HepG2 (cell line): ENCODE measurements at regions of chr1 and their contacts with region 1.

Region 1: DNA sequence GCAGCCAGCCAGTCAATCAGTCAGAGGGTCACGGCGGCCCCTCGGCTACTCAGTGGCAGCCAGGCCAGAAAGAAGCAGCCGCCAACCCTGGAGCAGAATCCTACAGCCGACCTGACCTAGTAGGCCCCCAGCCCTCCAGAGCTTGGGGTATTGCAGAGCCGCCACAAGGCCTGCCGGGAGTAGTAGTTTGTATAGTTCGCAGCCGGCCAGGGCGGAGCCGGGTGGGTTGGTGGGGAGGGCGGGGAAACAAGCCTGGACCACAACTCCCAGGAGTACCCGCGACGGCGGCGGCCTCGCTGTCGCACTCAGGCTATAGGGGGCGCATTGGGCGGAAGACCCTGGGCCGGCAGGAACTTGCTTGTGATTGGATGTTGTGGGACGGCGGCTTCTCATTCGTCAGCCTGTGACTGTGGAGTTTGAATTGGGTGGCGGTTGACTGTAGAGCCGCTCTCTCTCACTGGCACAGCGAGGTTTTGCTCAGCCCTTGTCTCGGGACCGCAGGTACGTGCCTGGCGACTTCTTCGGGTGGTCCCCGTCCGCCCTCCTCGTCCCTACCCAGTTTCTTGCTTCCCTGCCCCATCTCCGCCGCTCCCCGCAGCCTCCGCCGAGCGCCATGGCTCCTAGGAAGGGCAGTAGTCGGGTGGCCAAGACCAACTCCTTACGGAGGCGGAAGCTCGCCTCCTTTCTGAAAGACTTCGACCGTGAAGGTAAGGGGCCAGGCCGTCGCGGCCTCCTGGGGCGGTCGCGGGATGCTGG is at the start of gene CDCA8:
- DNase-seq: peak; percentile 95
- ATAC-seq: peak; percentile 93
- H3K4me3 ChIP-seq: peak within 1 kb of the TSS; percentile 83 to 99 (median 94)
- H3K27ac ChIP-seq: peak within 1 kb of the TSS; percentile 73
- H3K4me1 ChIP-seq: peaks cover 22% of the 10 kb centered on the region
- H3K27me3 ChIP-seq: no peaks in the 10 kb centered on the region; a peak in 1 of 5 replicates
- CTCF ChIP-seq: peak; percentile 89
- EP300 ChIP-seq: peak in 1 of 2 experiments; percentile 35; a peak in 1 of 4 replicates
- POLR2A ChIP-seq: peak; percentile 79 to 91; a peak in 3 of 4 replicates
- RAD21 ChIP-seq: 0 out of 2 replicates have a peak, but pooled peaks have one; percentile 25
- total RNA-seq, gene CDCA8: 38.6 and 48.7 TPM in 2 replicates

Region 2: GRCh38 chr1:37474046-37474759 is 218.1 kb before region 1 on chr1 and contains the start of gene ZC3H12A:
- CTCF ChIA-PET with region 1: no interaction called
- POLR2A ChIA-PET with region 1: interaction called, 8 read pairs
- in situ Hi-C with region 1: no loop called
- intact Hi-C with region 1: loop called (anchors 10 kb)
- DNase-seq: peak; percentile 78
- ATAC-seq: peak; percentile 51
- H3K4me3 ChIP-seq: peak within 1 kb of the TSS; percentile 70 to 85 (median 80)
- H3K27ac ChIP-seq: peak within 1 kb of the TSS; percentile 64
- H3K4me1 ChIP-seq: peaks cover 82% of the 10 kb centered on the region
- H3K27me3 ChIP-seq: no peaks in the 10 kb centered on the region; a peak in 1 of 5 replicates
- CTCF ChIP-seq: no peak
- EP300 ChIP-seq: peak in 1 of 2 experiments; percentile 32; a peak in 2 of 4 replicates
- POLR2A ChIP-seq: peak in 1 of 2 experiments; percentile 82; a peak in 2 of 4 replicates
- RAD21 ChIP-seq: peak; percentile 23; the same call in 1 of the 2 replicates
- total RNA-seq, gene ZC3H12A: 4.2 and 6.8 TPM in 2 replicates

Region 3: DNA sequence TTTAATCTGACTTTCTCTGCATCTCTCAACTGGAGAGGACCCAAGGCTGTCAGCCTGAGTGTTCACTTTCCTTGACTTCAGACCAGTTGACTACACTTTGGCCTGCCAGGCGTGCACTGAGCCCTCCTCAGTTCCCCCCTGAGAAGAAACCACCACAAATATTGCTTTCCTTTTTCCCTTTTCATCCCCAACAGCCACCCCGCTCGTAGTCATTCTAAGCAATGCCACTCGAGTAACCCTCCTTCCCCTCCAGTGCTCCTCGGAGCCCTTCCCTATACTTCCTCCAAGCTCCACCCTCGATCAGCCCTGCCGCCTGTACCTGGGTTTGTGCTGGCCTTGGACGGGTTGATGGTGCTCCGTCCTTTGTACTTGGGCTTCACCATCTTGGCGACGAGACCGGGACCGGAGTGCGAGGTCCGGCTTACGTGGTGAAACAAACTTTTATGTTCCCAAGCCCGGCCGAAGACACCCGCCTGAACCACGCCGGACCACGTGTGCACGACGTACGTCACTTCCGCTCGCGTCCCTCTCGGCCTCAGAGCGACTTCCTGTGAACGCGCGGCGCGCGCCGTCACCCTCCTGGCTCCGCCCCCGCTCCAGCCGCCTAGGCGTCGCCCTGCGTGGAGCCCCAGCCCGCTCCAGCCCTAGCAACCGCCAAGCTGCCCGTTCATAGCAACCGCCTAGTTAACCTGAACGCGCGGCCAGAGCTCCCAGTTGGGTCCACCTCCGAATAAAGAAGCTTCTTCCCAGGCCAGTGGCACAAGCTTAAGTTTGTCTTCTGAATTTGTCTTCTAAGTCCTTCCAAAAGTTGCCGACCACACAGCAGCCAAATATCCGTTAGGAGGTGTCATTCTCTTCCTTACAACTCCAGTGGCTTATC is 96.6 kb before region 1 on chr1 and contains the start of gene GNL2:
- CTCF ChIA-PET with region 1: no interaction called
- POLR2A ChIA-PET with region 1: interaction called, 14 read pairs
- in situ Hi-C with region 1: no loop called
- intact Hi-C with region 1: no loop called
- DNase-seq: peak; percentile 92
- ATAC-seq: peak; percentile 99
- H3K4me3 ChIP-seq: peak within 1 kb of the TSS; percentile 71 to 90 (median 87)
- H3K27ac ChIP-seq: peak within 1 kb of the TSS; percentile 72
- H3K4me1 ChIP-seq: peaks cover 25% of the 10 kb centered on the region
- H3K27me3 ChIP-seq: peaks cover 2 to 18% of the 10 kb centered on the region in 2 experiments; a peak in 3 of 5 replicates
- CTCF ChIP-seq: peak; percentile 28
- EP300 ChIP-seq: peak in 1 of 2 experiments; percentile 43; a peak in 1 of 4 replicates
- POLR2A ChIP-seq: peak; percentile 94 to 96
- RAD21 ChIP-seq: 0 out of 2 replicates have a peak, but pooled peaks have one; percentile 15
- total RNA-seq, gene GNL2: 72.1 and 101 TPM in 2 replicates

Region 4: GRCh38 chr1:37807555-37808368 is 115.5 kb after region 1 on chr1 and contains the starts of genes C1orf122 and YRDC:
- CTCF ChIA-PET with region 1: no interaction called
- POLR2A ChIA-PET with region 1: interaction called, 17 read pairs
- in situ Hi-C with region 1: no loop called
- intact Hi-C with region 1: loop called (anchors 1 kb)
- DNase-seq: peak; percentile 83
- ATAC-seq: peak; percentile 87
- H3K4me3 ChIP-seq: peak within 1 kb of the TSS; percentile 72 to 85 (median 75)
- H3K27ac ChIP-seq: peak within 1 kb of the TSS; percentile 75
- H3K4me1 ChIP-seq: peaks cover 42% of the 10 kb centered on the region
- H3K27me3 ChIP-seq: no peaks in the 10 kb centered on the region; a peak in 1 of 5 replicates
- CTCF ChIP-seq: no peak
- EP300 ChIP-seq: no peak
- POLR2A ChIP-seq: peak; percentile 86 to 89
- RAD21 ChIP-seq: peak; percentile 40; the same call in 1 of the 2 replicates
- total RNA-seq, gene C1orf122: 31.3 and 40.6 TPM in 2 replicates
- total RNA-seq, gene YRDC: 29.2 and 31.8 TPM in 2 replicates